Activated naive CD4-positive, alpha-beta T cell treated with anti-CD3 and anti-CD28 coated beads for 36 hours (primary cell): ENCODE measurements at regions of chr6 and their contacts with region 1.

Region 1: DNA sequence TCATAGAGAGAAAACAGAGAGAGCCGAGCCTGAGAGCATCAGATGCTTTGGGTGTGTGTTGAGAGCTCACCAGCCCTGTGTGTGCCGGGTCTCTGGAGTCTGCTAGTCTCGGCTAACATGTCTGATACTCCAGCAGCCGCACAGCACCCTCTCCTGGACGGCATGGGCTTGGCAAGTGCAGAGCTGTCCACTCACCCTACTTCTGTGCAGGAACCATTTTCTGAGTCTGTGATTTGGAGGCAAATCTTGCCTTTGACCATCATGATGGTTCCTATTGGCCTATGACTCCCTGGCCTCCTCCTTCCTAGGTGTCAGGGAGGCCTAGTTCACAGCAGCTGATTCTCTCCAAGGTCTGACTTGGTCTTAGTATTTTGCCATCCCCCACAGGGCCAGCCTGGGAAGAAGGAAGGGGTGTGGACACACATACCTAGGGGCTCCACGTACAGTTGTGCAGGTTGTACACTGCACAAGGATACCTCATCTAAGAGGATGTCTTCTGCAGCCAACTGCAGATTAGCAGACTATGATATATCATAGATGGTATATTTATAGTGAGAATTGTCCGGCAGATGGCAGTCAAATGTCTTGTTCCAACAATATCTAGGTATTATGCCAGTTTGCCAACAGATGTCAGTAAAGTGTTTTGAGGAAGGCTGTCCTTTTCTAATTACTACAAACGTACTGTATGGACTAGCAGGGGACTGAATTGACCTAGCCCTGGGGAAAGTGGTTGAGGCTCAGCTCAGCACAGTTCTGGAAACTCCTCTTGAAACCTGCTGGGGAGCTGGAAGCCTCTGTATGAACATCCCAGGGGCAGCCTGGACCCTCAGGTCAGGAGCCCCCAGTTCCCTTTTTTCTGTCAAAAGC is 13.0 kb downstream of the FGD2 start:
- DNase-seq: peak; percentile 97
- H3K4me3 Mint-ChIP-seq: no peak overlapping the region
- H3K27ac Mint-ChIP-seq: peak overlapping the region; percentile 26
- H3K4me1 Mint-ChIP-seq: peaks cover 38% of the 10 kb centered on the region
- H3K27me3 Mint-ChIP-seq: no peaks in the 10 kb centered on the region

Region 2: GRCh38 chr6:36780442-36781177 is 237.8 kb before region 1 on chr6:
- CTCF ChIA-PET with region 1: interaction called, 14 read pairs
- intact Hi-C with region 1: loop called (anchors 5 kb)
- DNase-seq: no peak
- H3K4me3 Mint-ChIP-seq: no peak overlapping the region
- H3K27ac Mint-ChIP-seq: no peak overlapping the region
- H3K4me1 Mint-ChIP-seq: no peaks in the 10 kb centered on the region
- H3K27me3 Mint-ChIP-seq: no peaks in the 10 kb centered on the region

Region 3: GRCh38 chr6:36912586-36912985 is 105.8 kb before region 1 on chr6:
- CTCF ChIA-PET with region 1: interaction called, 18 read pairs
- intact Hi-C with region 1: loop called (anchors 1 kb)
- DNase-seq: peak; percentile 72
- H3K4me3 Mint-ChIP-seq: peak overlapping the region; percentile 5
- H3K27ac Mint-ChIP-seq: peak overlapping the region; percentile 71
- H3K4me1 Mint-ChIP-seq: peaks cover 40% of the 10 kb centered on the region
- H3K27me3 Mint-ChIP-seq: no peaks in the 10 kb centered on the region

Region 4: GRCh38 chr6:37029249-37029971 is 11.0 kb after region 1 on chr6:
- CTCF ChIA-PET with region 1: interaction called, 43 read pairs
- intact Hi-C with region 1: no loop called
- DNase-seq: peak; percentile 67
- H3K4me3 Mint-ChIP-seq: no peak overlapping the region
- H3K27ac Mint-ChIP-seq: peak overlapping the region; percentile 26
- H3K4me1 Mint-ChIP-seq: peaks cover 46% of the 10 kb centered on the region
- H3K27me3 Mint-ChIP-seq: no peaks in the 10 kb centered on the region

Region 5: GRCh38 chr6:37207903-37208456 is 189.5 kb after region 1 on chr6:
- CTCF ChIA-PET with region 1: interaction called, 704 read pairs
- intact Hi-C with region 1: loop called (anchors 1 kb)
- DNase-seq: peak; percentile 98
- H3K4me3 Mint-ChIP-seq: no peak overlapping the region
- H3K27ac Mint-ChIP-seq: peak overlapping the region; percentile 73
- H3K4me1 Mint-ChIP-seq: peaks cover 69% of the 10 kb centered on the region
- H3K27me3 Mint-ChIP-seq: no peaks in the 10 kb centered on the region

Region 6: GRCh38 chr6:37499433-37500293 is 481.2 kb after region 1 on chr6 and contains the start of gene CCDC167:
- CTCF ChIA-PET with region 1: no interaction called
- intact Hi-C with region 1: loop called (anchors 5 kb)
- DNase-seq: peak; percentile 99
- H3K4me3 Mint-ChIP-seq: peak within 1 kb of the TSS; percentile 98
- H3K27ac Mint-ChIP-seq: peak within 1 kb of the TSS; percentile 97
- H3K4me1 Mint-ChIP-seq: peaks cover 90% of the 10 kb centered on the region
- H3K27me3 Mint-ChIP-seq: no peaks in the 10 kb centered on the region
- total RNA-seq, gene CCDC167: 53.4 to 57.1 TPM